Heart right ventricle (tissue), 16 donors: ENCODE measurements at regions of chr11 and their contacts with region 1.

Region 1: GRCh38 chr11:68870470-68870869 is 28.8 kb upstream of the CPT1A start:
- DNase-seq: no peak
- ATAC-seq: peak in 5 of 8 donors; percentile 10 to 54 (median 24)
- H3K4me3 ChIP-seq: peak overlapping the region in 9 of 10 donors; percentile 23 to 62 (median 56)
- H3K27ac ChIP-seq: peak overlapping the region in 2 of 10 donors; percentile 20 to 54
- H3K4me1 ChIP-seq: peaks cover 5 to 48% (median 21%) of the 10 kb centered on the region in 9 donors
- H3K27me3 ChIP-seq: no peaks in the 10 kb centered on the region
- CTCF ChIP-seq: peak in 2 of 9 donors; percentile 28 to 41

Region 2: DNA sequence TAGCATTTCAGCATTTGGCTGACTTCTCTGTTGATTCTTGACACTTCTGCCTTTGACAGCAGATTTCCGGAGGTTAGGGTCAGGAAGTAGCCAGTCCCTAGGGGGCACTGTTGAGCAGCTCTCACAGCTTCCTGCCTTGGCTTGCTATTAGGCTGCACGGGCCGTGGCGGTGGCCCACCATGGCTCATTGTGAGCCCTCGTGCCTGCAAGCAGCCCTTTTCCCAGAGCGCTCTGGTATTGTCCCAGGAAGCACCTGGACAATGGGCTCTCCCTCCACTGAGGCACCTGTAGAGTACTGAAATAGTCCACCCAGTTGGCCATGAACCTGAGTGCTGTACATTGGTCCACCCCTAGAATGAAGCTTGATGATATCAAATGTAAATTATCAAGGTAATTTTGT is 286.4 kb before region 1 on chr11:
- intact Hi-C with region 1: loop called in 1 of 10 experiments (anchors 10 kb)
- DNase-seq: peak; percentile 46 to 47
- ATAC-seq: peak in 3 of 8 donors; percentile 15 to 35 (median 19)
- H3K4me3 ChIP-seq: no peak overlapping the region
- H3K27ac ChIP-seq: peak overlapping the region in 9 of 10 donors; percentile 19 to 87 (median 76)
- H3K4me1 ChIP-seq: peaks cover 10 to 66% (median 35%) of the 10 kb centered on the region in 9 donors
- H3K27me3 ChIP-seq: no peaks in the 10 kb centered on the region
- CTCF ChIP-seq: peak; percentile 31 to 73 (median 61)

Region 3: GRCh38 chr11:68942751-68943271 is 72.3 kb after region 1 on chr11:
- intact Hi-C with region 1: loop called in 1 of 10 experiments (anchors 2 kb)
- DNase-seq: no peak
- ATAC-seq: peak in 6 of 8 donors; percentile 13 to 46 (median 34)
- H3K4me3 ChIP-seq: no peak overlapping the region
- H3K27ac ChIP-seq: peak overlapping the region in 2 of 10 donors; percentile 3 to 28
- H3K4me1 ChIP-seq: peaks cover 0 to 14% (median 6%) of the 10 kb centered on the region in 9 donors
- H3K27me3 ChIP-seq: no peaks in the 10 kb centered on the region
- CTCF ChIP-seq: no peak